Activated naive CD4-positive, alpha-beta T cell treated with anti-CD3 and anti-CD28 coated beads for 36 hours (primary cell): ENCODE measurements at regions of chr9 and their contacts with region 1.

Region 1: GRCh38 chr9:111516061-111516465 is 8.9 kb upstream of the ZNF483 start:
- DNase-seq: no peak
- H3K4me3 Mint-ChIP-seq: no peak overlapping the region
- H3K27ac Mint-ChIP-seq: no peak overlapping the region
- H3K4me1 Mint-ChIP-seq: no peaks in the 10 kb centered on the region
- H3K27me3 Mint-ChIP-seq: peaks cover 5% of the 10 kb centered on the region

Region 2: GRCh38 chr9:111566234-111566633 is 50.2 kb after region 1 on chr9:
- CTCF ChIA-PET with region 1: no interaction called
- intact Hi-C with region 1: loop called (anchors 10 kb)
- DNase-seq: no peak
- H3K4me3 Mint-ChIP-seq: no peak overlapping the region
- H3K27ac Mint-ChIP-seq: no peak overlapping the region
- H3K4me1 Mint-ChIP-seq: no peaks in the 10 kb centered on the region
- H3K27me3 Mint-ChIP-seq: no peaks in the 10 kb centered on the region

Region 3: DNA sequence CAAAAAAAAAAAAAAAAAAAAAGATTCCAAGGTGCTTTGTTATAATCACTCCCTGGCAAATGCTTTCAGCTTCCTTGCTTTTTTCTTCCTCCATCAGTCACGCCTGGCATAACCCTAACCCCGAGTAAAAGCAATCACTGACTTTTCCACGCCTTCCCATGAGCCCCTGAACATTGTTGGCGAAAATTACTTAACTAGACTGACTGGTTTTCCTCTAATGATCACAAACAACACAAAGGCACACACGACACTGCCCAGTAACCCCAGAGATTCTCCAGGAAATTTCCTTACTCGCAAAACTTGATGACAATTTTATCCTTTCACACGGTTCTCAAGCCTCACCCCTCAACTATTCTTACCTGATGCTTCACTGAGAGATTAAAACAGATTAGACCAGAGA is 94.8 kb after region 1 on chr9:
- CTCF ChIA-PET with region 1: no interaction called
- intact Hi-C with region 1: no loop called
- DNase-seq: no peak
- H3K4me3 Mint-ChIP-seq: no peak overlapping the region
- H3K27ac Mint-ChIP-seq: no peak overlapping the region
- H3K4me1 Mint-ChIP-seq: no peaks in the 10 kb centered on the region
- H3K27me3 Mint-ChIP-seq: peaks cover 29% of the 10 kb centered on the region